Breast epithelium (tissue), 4 donors: ENCODE measurements at regions of chr12 and their contacts with region 1.

Region 1: GRCh38 chr12:118590406-118591150 is 214.2 kb downstream of the SUDS3 start:
- DNase-seq: no peak
- H3K4me3 ChIP-seq: no peak overlapping the region
- H3K27ac ChIP-seq: no peak overlapping the region
- H3K4me1 ChIP-seq: no peaks in the 10 kb centered on the region
- H3K27me3 ChIP-seq: peaks cover 0 to 6% of the 10 kb centered on the region in 2 donors
- CTCF ChIP-seq: no peak
- POLR2A ChIP-seq: no peak

Region 2: DNA sequence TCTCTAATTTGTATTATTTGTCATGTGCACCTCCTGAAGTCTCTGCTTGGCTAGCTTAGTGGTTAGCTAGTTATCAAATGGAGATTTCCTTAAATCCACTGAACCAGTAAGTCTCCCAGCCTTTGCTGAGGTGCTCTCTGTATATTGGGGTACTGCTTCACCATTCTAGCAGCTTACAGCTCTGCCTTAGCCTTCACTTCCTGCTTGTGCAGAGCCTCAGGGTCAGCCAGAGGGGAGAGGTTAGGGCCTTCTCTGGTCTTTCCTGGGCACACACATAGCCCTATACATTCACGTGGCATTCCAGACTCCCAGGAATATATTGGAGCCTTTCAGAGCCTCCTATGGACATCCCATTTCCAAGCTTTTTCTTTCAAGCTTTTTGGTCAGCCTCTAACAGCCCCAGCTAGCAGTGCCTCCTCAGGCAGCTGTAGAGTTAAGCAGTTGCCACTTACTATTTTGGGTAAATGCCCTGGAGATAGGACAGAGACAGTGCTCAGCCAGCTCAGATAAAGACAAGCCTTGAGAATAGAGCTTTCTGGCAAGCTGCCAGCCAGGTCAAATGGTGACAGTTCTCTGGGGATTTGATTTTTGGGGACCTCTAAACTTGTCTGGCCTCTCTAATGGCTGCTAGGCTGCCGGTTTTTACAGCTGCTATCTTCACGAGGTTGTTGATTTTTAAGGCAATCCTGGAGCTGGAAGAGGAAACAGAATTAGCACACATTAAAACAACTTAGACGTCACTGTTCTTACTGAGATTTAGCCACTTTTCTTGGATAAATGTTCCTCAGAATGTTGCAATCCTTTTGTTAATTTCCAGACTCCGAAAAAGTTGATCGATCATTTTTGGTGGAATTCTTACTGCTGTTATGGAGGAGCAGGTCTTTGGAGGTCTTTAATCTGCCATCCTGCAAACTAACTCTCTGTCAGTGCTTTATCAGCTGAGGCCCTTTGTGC is 1646.9 kb before region 1 on chr12:
- intact Hi-C with region 1: no loop called
- DNase-seq: no peak
- H3K4me3 ChIP-seq: no peak overlapping the region
- H3K27ac ChIP-seq: no peak overlapping the region
- H3K4me1 ChIP-seq: no peaks in the 10 kb centered on the region
- H3K27me3 ChIP-seq: no peaks in the 10 kb centered on the region
- CTCF ChIP-seq: no peak
- POLR2A ChIP-seq: no peak

Region 3: GRCh38 chr12:119052001-119052400 is 461.4 kb after region 1 on chr12:
- intact Hi-C with region 1: loop called (anchors 5 kb)
- DNase-seq: no peak
- H3K4me3 ChIP-seq: no peak overlapping the region
- H3K27ac ChIP-seq: no peak overlapping the region
- H3K4me1 ChIP-seq: no peaks in the 10 kb centered on the region
- H3K27me3 ChIP-seq: no peaks in the 10 kb centered on the region
- CTCF ChIP-seq: no peak
- POLR2A ChIP-seq: no peak